ENCODE measurements at regions of chr19 and their contacts with region 1.

Region 1: GRCh38 chr19:46661020-46661731 is at the start of gene DACT3:
- DNase-seq: peak; percentile 100
- H3K4me3 Mint-ChIP-seq: peak within 1 kb of the TSS; percentile 66
- H3K27ac Mint-ChIP-seq: peak within 1 kb of the TSS; percentile 87
- H3K4me1 Mint-ChIP-seq: peaks cover 23% of the 10 kb centered on the region
- H3K27me3 Mint-ChIP-seq: peaks cover 83% of the 10 kb centered on the region

Region 2: GRCh38 chr19:46513461-46514236 is 147.5 kb before region 1 on chr19:
- CTCF ChIA-PET with region 1: interaction called, 19 read pairs
- DNase-seq: peak; percentile 86
- H3K4me3 Mint-ChIP-seq: no peak overlapping the region
- H3K27ac Mint-ChIP-seq: no peak overlapping the region
- H3K4me1 Mint-ChIP-seq: peaks cover 24% of the 10 kb centered on the region
- H3K27me3 Mint-ChIP-seq: peaks cover 44% of the 10 kb centered on the region

Region 3: DNA sequence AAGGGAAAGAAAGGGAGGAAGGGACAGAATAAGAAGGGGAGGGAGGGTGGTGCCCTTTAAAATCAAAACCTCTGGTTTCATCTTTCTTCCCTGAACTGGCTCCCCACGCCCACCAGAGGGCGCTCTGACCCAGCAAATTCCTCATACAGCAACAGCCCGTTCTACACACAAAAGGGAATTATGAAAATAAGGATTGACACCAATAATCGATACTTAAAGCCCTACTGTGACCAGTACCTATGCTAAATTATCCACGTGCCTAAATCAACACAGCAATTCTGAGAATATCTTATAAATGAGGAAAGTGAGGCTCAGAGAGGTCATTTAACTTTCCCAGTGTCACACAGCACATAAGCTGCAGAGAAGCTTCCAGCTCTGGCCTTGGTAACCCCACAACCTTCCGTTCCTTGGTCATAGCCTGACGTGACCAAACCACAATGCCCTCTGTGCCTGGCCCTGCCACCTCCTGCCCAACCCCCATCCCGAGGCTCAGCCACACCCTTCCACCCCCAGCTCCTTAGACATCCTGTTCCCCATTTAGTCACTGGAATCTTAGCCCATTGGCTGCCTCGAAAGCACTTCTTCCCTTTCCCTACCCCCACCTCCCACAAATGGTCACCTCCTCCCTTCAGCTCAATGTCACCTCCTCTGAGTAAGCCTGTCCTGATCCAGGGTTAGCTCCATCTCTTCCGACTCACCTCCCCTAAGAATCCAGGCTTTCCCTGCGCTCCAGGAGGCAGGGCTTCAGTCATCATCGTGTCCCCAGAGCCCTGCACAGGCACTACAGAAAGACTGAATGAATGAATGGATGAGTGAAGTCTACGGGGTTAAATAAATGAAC is 131.3 kb before region 1 on chr19:
- CTCF ChIA-PET with region 1: interaction called, 32 read pairs
- DNase-seq: peak; percentile 83
- H3K4me3 Mint-ChIP-seq: no peak overlapping the region
- H3K27ac Mint-ChIP-seq: peak overlapping the region; percentile 31
- H3K4me1 Mint-ChIP-seq: peaks cover 22% of the 10 kb centered on the region
- H3K27me3 Mint-ChIP-seq: peaks cover 38% of the 10 kb centered on the region

Region 4: DNA sequence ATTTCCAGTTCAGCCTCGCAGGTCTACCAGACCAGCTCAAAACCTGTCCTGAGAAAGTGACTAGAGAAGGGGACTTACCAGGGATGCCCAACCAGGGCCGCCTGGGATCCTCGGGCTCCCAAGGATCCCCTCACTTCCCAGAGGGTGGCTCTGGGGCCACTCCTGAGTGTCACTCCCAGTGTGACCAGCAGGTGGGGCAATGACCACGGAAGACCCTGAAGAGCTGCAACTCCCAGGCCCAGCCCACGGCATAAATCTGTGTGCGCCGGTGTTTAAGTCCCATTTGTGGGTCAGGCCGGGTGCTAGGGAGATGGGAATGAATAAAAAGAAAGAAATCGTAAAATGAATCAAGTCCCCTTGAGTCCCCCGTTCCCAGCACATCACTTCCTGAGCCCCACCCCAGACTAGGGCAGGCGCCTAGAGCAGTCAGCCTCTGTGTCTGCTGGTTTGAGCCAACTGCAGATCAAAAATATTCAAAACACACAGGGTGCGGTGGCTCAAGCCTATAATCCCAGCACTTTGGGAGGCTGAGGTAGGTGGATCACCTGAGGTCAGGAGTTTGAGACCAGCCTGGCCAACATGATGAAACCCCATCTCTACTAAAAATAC is 47.0 kb before region 1 on chr19:
- CTCF ChIA-PET with region 1: interaction called, 147 read pairs
- DNase-seq: peak; percentile 87
- H3K4me3 Mint-ChIP-seq: no peak overlapping the region
- H3K27ac Mint-ChIP-seq: peak overlapping the region; percentile 80
- H3K4me1 Mint-ChIP-seq: peaks cover 79% of the 10 kb centered on the region
- H3K27me3 Mint-ChIP-seq: no peaks in the 10 kb centered on the region

Region 5: DNA sequence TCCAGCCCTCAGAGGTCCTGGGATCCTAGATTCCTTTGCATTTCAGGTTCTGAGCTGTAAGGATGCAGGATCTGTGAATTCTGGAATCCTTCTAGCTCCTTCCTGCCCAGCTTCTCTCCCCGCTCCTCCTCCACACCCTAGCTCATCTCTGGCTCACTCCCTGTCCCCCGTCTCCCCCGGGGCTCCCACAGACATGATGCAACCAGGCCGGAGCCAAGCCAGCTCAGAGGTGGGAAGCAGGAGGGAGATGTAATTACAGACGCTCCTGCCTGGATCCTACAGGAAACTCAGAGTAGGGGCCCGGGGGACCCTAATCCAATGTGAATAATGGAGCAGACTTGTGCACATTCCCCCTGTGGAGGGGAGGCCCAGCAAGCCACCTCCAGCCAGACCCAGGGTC is 29.7 kb before region 1 on chr19:
- CTCF ChIA-PET with region 1: interaction called, 13 read pairs
- DNase-seq: no peak
- H3K4me3 Mint-ChIP-seq: no peak overlapping the region
- H3K27ac Mint-ChIP-seq: no peak overlapping the region
- H3K4me1 Mint-ChIP-seq: peaks cover 27% of the 10 kb centered on the region
- H3K27me3 Mint-ChIP-seq: peaks cover 52% of the 10 kb centered on the region

Measured in activated naive CD4-positive, alpha-beta T cell treated with anti-CD3 and anti-CD28 coated beads, Interleukin-2, amount 10 ng/mL, durations not matched to agents 7 days and 5 days (primary cell).